ENCODE measurements at regions of chr10 and their contacts with region 1.

Region 1: GRCh38 chr10:22010973-22011408 is 7.5 kb upstream of the DNAJC1 start:
- DNase-seq: no peak

Region 2: DNA sequence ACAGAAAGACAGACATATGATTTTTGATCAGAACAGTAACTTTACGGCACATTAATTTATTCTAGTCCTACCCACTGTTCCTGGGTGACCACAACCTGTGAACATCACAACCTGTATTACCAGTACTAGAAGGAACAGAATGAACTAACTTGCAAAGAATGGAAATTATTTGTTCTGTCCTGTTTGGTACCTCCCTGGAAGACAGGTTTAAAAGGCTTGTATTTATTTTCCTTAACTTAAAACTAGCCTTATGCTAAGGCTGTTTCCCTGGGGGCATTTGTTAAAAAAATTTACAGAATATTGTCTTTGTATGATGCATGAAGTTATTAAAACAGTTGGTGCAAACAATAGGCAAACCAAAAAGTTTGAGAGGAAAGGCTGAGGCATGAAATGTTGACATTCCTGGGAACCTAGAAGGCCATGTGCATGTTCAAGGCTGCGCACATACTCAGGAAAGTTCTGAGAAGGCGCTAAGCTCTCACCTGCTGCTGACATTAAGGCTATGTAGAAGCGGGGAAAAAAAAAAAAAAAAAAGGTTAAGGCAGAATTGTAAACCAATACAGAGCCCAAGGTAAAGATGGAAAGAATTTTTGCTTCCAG is 140.1 kb before region 1 on chr10:
- intact Hi-C with region 1: no loop called
- DNase-seq: no peak

Region 3: GRCh38 chr10:21975378-21975990 is 35.5 kb before region 1 on chr10:
- intact Hi-C with region 1: no loop called
- DNase-seq: no peak

Region 4: GRCh38 chr10:22988581-22989360 is 977.8 kb after region 1 on chr10:
- intact Hi-C with region 1: loop called in 1 of 2 experiments (anchors 5 kb)
- DNase-seq: no peak